ENCODE measurements at regions of chr20 and their contacts with region 1.

Region 1: DNA sequence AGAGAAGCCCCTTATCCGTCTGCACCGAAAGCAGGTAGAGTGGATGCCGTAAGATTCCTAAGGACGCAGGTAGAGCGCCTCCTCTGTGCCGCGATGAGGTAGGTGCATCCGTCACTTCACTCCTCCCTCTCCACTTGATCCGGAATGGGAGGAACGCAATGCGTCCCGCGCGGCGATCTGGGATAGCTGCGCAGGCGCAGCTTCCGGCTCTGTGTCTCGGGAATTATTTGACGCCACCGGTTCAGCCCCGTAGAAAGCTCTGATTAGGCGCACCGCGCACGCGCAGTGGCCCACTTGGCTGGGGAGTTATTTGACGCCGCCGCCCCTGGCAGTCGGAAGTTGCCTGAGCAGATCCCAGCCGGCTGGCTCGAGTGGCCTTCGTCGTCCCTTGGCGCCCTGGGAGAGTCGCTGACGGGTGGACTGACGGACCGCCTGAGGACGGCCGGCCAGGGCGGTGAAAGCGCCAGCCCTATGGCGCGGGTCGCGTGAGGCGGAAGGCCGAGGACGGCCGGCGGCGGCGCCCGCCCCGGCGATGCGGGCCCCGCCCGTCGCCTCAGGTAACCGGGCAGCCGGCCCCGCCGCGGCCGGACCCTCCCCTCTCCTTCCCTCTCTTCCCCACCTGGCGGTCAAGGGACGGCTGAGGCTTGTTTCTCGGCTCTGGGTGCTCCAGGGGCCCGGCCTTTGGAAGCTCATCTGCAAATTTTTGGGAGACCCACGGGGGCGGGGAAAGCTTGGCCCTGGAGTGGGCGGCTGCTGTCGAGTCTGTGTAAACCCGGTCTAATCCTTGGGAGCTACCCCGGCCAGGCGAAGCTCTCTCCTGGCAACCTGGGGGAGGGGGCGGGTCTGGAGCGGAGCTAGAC is at the start of gene RALGAPB:
- DNase-seq: peak; percentile 96
- ATAC-seq: peak; percentile 98
- H3K4me3 ChIP-seq: peak within 1 kb of the TSS; percentile 67
- H3K27ac ChIP-seq: peak within 1 kb of the TSS; percentile 68
- H3K4me1 ChIP-seq: peaks cover 2% of the 10 kb centered on the region
- H3K27me3 ChIP-seq: no peaks in the 10 kb centered on the region; the same call in 1 of the 2 replicates
- CTCF ChIP-seq: peak; percentile 33
- POLR2A ChIP-seq: peak; percentile 66
- RAD21 ChIP-seq: 0 out of 2 replicates have a peak, but pooled peaks have one; percentile 8
- total RNA-seq, gene RALGAPB: 30.3 and 32.8 TPM in 2 replicates

Region 2: GRCh38 chr20:38446441-38447209 is 26.1 kb before region 1 on chr20:
- CTCF ChIA-PET with region 1: interaction called, 4 read pairs
- POLR2A ChIA-PET with region 1: no interaction called
- dilution Hi-C with region 1: no loop called
- in situ Hi-C with region 1: no loop called
- intact Hi-C with region 1: loop called (anchors 1 kb)
- DNase-seq: peak; percentile 94
- ATAC-seq: peak; percentile 98
- H3K4me3 ChIP-seq: peak overlapping the region; percentile 76
- H3K27ac ChIP-seq: peak overlapping the region; percentile 63
- H3K4me1 ChIP-seq: peaks cover 6% of the 10 kb centered on the region; the same call in 1 of the 2 replicates
- H3K27me3 ChIP-seq: no peaks in the 10 kb centered on the region
- CTCF ChIP-seq: peak; percentile 97
- POLR2A ChIP-seq: peak; percentile 90
- RAD21 ChIP-seq: peak; percentile 46

Region 3: GRCh38 chr20:38536310-38536709 is 63.6 kb after region 1 on chr20:
- CTCF ChIA-PET with region 1: no interaction called
- POLR2A ChIA-PET with region 1: no interaction called
- dilution Hi-C with region 1: no loop called
- in situ Hi-C with region 1: loop called (anchors 10 kb)
- intact Hi-C with region 1: no loop called
- DNase-seq: peak; percentile 74
- ATAC-seq: peak; percentile 84
- H3K4me3 ChIP-seq: no peak overlapping the region
- H3K27ac ChIP-seq: no peak overlapping the region
- H3K4me1 ChIP-seq: no peaks in the 10 kb centered on the region; the same call in 1 of the 2 replicates
- H3K27me3 ChIP-seq: no peaks in the 10 kb centered on the region
- CTCF ChIP-seq: peak; percentile 24; the same call in 1 of the 2 replicates
- POLR2A ChIP-seq: no peak
- RAD21 ChIP-seq: no peak

Measured in IMR-90 (cell line).